Colonic mucosa (tissue), 4 donors: ENCODE measurements at regions of chr2 and their contacts with region 1.

Region 1: DNA sequence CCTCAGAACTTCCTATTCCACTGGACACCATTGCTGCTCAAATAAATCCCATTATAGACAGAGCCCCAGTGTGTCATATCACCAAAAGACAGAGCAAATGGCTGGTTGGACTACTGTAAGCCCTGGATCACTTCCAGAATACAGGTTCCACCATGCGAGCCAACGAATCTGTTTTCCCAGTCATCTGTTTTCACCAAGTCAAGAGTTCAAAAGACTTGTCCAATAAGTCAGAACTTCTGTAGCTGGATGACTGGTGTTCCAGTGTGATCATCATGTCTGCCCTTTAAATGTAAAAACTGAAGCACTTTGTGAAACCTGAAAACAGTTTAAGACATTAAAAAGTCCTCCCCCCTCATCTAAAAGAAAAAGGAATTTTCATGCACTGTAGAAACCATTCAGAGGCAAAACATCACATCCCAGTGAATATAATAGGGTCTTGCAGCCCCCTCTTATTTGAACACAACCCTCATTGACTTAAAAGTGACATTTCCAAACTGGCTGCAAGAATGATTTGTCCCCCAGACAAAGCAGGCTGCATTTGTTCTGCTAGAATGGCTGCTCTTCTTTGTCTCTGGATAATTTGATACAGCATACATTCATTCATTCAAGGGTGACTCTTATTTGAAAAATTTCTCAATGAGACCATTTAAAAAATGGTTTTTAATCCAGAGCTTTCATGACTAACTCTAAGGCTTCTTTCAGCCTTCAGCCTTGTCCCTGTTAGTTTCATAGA is 64.6 kb upstream of the TANC1 start:
- DNase-seq: no peak
- H3K4me3 ChIP-seq: no peak overlapping the region
- H3K27ac ChIP-seq: no peak overlapping the region
- H3K4me1 ChIP-seq: no peaks in the 10 kb centered on the region
- H3K27me3 ChIP-seq: no peaks in the 10 kb centered on the region
- CTCF ChIP-seq: no peak

Region 2: GRCh38 chr2:158828493-158829164 is 75.2 kb before region 1 on chr2:
- intact Hi-C with region 1: no loop called
- DNase-seq: no peak
- H3K4me3 ChIP-seq: no peak overlapping the region
- H3K27ac ChIP-seq: no peak overlapping the region
- H3K4me1 ChIP-seq: no peaks in the 10 kb centered on the region
- H3K27me3 ChIP-seq: no peaks in the 10 kb centered on the region
- CTCF ChIP-seq: no peak

Region 3: GRCh38 chr2:159118115-159118858 is 214.4 kb after region 1 on chr2:
- intact Hi-C with region 1: loop called (anchors 2 kb)
- DNase-seq: peak; percentile 92
- H3K4me3 ChIP-seq: no peak overlapping the region
- H3K27ac ChIP-seq: no peak overlapping the region
- H3K4me1 ChIP-seq: peaks cover 4% of the 10 kb centered on the region
- H3K27me3 ChIP-seq: no peaks in the 10 kb centered on the region
- CTCF ChIP-seq: peak; percentile 95

Region 4: GRCh38 chr2:159185401-159186130 is 281.7 kb after region 1 on chr2:
- intact Hi-C with region 1: loop called (anchors 10 kb)
- DNase-seq: no peak
- H3K4me3 ChIP-seq: no peak overlapping the region
- H3K27ac ChIP-seq: no peak overlapping the region
- H3K4me1 ChIP-seq: no peaks in the 10 kb centered on the region
- H3K27me3 ChIP-seq: no peaks in the 10 kb centered on the region
- CTCF ChIP-seq: peak; percentile 29

Region 5: GRCh38 chr2:160085662-160086061 is 1181.8 kb after region 1 on chr2:
- intact Hi-C with region 1: no loop called
- DNase-seq: no peak
- H3K4me3 ChIP-seq: no peak overlapping the region
- H3K27ac ChIP-seq: no peak overlapping the region
- H3K4me1 ChIP-seq: no peaks in the 10 kb centered on the region
- H3K27me3 ChIP-seq: no peaks in the 10 kb centered on the region
- CTCF ChIP-seq: no peak